ENCODE measurements at regions of chr4 and their contacts with region 1.

Region 1: DNA sequence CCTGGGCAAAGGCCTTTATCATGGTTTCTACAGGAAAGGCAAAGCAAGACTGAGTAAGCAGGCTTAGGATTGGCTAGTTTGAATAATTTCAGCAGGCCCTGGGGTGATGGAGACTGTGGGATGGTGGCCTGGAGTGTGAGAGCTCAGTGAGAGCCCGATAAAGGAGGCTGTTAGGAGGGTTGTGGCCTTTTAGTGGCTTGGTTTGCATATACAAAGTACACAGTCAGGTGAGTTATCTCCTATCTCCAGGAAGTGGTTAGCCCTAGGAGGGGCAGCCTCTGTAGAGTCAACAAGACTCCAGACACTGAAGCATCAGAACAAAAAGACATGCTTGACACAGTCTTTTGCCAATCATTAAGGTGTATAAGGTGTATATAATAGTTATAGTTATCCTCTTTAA is 157.2 kb downstream of the CFAP299 start:
- DNase-seq: peak; percentile 37 to 94 (median 51)
- ATAC-seq: peak; percentile 94
- H3K4me3 ChIP-seq: no peak overlapping the region
- H3K4me3 Mint-ChIP-seq: peak overlapping the region; percentile 52
- H3K27ac ChIP-seq: peak overlapping the region; percentile 56 to 58
- H3K27ac Mint-ChIP-seq: peak overlapping the region; percentile 98
- H3K4me1 ChIP-seq: peaks cover 31% of the 10 kb centered on the region
- H3K4me1 Mint-ChIP-seq: peaks cover 72% of the 10 kb centered on the region
- H3K27me3 ChIP-seq: no peaks in the 10 kb centered on the region
- H3K27me3 Mint-ChIP-seq: no peaks in the 10 kb centered on the region
- CTCF ChIP-seq: no peak

Region 2: DNA sequence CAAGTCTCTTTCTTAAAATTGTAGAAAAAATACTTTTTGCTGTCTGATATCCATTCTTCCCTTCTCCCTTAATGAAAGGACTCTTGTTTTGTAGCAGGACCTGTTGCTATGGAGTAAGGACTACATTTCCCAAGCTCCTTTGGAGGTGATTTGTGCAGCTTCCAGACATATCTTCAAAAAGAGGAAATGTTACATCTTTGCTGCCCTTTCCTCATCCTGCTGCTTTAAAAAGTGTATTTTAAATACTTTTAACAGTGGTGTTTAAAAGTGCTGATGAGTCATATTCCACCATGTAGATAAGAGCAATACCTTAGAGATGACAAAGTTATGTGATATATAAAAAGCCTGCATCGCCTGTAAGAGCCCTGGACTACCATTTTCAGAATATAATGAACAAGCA is 58.5 kb before region 1 on chr4:
- CTCF ChIA-PET with region 1: no interaction called
- POLR2A ChIA-PET with region 1: interaction called, 11 read pairs
- intact Hi-C with region 1: loop called in 1 of 2 experiments (anchors 5 kb)
- DNase-seq: no peak
- ATAC-seq: no peak
- H3K4me3 ChIP-seq: no peak overlapping the region
- H3K4me3 Mint-ChIP-seq: no peak overlapping the region
- H3K27ac ChIP-seq: no peak overlapping the region
- H3K27ac Mint-ChIP-seq: no peak overlapping the region
- H3K4me1 ChIP-seq: peaks cover 3% of the 10 kb centered on the region
- H3K4me1 Mint-ChIP-seq: peaks cover 13% of the 10 kb centered on the region
- H3K27me3 ChIP-seq: no peaks in the 10 kb centered on the region
- H3K27me3 Mint-ChIP-seq: no peaks in the 10 kb centered on the region
- CTCF ChIP-seq: no peak

Region 3: DNA sequence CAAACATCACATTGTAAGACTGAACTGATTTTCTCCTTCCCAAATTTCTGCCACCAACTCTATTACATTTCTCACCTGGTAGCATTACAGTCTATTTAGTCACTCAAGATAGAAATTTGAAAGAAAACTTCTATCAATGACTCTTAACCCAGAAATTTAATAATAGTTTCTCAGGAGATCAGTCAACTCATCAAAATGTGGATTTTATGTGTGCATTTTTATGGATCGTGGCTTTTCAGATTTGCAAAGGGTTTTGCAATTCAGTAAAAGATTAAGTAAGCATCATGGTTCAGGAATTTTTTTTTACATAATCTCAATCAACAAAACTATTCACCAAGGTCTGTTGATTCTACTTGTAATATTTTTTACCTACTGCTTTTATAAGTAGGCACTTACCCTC is 46.1 kb before region 1 on chr4:
- CTCF ChIA-PET with region 1: no interaction called
- POLR2A ChIA-PET with region 1: no interaction called
- intact Hi-C with region 1: loop called in 1 of 2 experiments (anchors 5 kb)
- DNase-seq: no peak
- ATAC-seq: no peak
- H3K4me3 ChIP-seq: no peak overlapping the region
- H3K4me3 Mint-ChIP-seq: no peak overlapping the region
- H3K27ac ChIP-seq: no peak overlapping the region
- H3K27ac Mint-ChIP-seq: no peak overlapping the region
- H3K4me1 ChIP-seq: no peaks in the 10 kb centered on the region
- H3K4me1 Mint-ChIP-seq: peaks cover 3% of the 10 kb centered on the region
- H3K27me3 ChIP-seq: no peaks in the 10 kb centered on the region
- H3K27me3 Mint-ChIP-seq: no peaks in the 10 kb centered on the region
- CTCF ChIP-seq: no peak

Region 4: DNA sequence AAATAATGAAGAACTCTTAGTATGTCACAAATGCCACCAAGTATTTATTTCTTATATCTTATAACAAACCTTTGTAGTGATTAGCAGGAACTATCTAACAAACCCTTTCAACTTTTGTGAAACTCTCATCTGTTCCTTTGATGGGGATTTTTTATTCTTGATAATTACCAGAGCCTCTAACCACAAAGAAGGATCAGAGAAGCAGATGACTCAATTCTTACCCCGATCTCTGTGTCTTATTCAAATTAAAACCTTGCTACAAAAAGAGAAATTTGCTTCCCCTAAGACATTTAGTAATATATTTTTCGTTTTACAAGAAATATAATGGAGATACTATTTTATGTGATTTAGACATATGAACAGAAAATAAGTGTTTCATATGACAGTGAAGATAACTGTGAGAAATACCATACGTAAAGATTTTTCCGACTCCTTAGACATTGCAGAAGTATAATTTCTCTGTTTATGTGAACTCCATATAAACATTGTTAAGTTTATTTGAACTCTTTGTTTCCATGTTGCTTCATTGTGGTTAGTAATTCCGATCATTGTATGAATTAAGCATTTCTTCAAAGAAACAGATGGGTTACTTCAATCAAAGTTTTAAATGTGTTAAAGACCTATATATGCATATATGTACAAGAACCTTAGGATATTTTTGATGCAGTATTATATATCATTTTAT is 48.2 kb after region 1 on chr4:
- CTCF ChIA-PET with region 1: interaction called, 4 read pairs
- POLR2A ChIA-PET with region 1: interaction called, 3 read pairs
- intact Hi-C with region 1: loop called in 1 of 2 experiments (anchors 5 kb)
- DNase-seq: peak in 3 of 14 experiments; percentile 22 to 46 (median 37)
- ATAC-seq: peak; percentile 65
- H3K4me3 ChIP-seq: no peak overlapping the region
- H3K4me3 Mint-ChIP-seq: no peak overlapping the region
- H3K27ac ChIP-seq: no peak overlapping the region
- H3K27ac Mint-ChIP-seq: no peak overlapping the region
- H3K4me1 ChIP-seq: no peaks in the 10 kb centered on the region
- H3K4me1 Mint-ChIP-seq: peaks cover 30% of the 10 kb centered on the region
- H3K27me3 ChIP-seq: no peaks in the 10 kb centered on the region
- H3K27me3 Mint-ChIP-seq: peaks cover 24% of the 10 kb centered on the region
- CTCF ChIP-seq: no peak

Region 5: GRCh38 chr4:82484996-82485783 is 1992.4 kb after region 1 on chr4:
- CTCF ChIA-PET with region 1: no interaction called
- POLR2A ChIA-PET with region 1: no interaction called
- intact Hi-C with region 1: no loop called
- DNase-seq: no peak
- ATAC-seq: no peak
- H3K4me3 ChIP-seq: no peak overlapping the region
- H3K4me3 Mint-ChIP-seq: no peak overlapping the region
- H3K27ac ChIP-seq: no peak overlapping the region
- H3K27ac Mint-ChIP-seq: no peak overlapping the region
- H3K4me1 ChIP-seq: no peaks in the 10 kb centered on the region
- H3K4me1 Mint-ChIP-seq: no peaks in the 10 kb centered on the region
- H3K27me3 ChIP-seq: no peaks in the 10 kb centered on the region
- H3K27me3 Mint-ChIP-seq: no peaks in the 10 kb centered on the region
- CTCF ChIP-seq: no peak